AG04450 (cell line): ENCODE measurements at regions of chr10 and their contacts with region 1.

Region 1: DNA sequence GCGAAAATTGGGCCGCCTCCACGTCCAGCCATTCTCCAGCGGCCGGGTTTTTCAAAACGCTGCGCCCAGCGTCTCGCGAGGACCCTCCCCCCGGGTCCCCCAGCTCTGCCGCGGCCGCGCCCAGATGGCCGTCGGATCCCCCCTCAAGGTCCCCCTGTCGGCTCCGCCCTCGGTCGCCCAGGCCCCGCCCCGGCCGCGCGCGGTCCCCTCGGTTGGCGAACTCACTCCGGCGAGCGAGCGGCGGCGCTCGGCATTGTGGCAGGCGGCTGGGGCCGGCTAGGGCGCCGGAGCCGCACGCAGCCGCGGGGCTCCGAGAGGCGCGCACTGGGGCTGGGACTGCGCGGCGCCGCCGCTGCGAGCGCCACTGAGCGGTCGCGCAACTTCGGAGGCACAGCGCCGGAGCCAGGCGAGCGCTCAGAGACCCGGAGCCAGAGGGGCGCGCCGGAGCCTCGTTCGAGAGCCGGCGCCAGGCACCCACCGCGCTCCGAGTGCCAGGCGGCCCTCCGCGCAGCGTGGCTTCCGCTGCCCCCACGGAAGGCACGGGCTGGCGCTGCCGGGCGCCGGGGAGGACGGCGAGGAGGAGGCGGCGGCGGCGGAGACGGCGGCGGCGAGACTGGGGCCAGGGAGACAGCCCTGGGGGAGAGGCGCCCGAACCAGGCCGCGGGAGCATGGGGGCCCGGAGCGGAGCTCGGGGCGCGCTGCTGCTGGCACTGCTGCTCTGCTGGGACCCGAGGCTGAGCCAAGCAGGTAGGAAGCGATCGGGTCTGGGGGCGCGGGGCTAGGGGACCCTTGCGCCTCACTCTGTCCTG is at the start of gene UNC5B:
- DNase-seq: peak; percentile 48
- H3K4me3 ChIP-seq: peak within 1 kb of the TSS; percentile 88
- H3K27ac ChIP-seq: peak within 1 kb of the TSS; percentile 11
- H3K27me3 ChIP-seq: peaks cover 24% of the 10 kb centered on the region
- CTCF ChIP-seq: peak; percentile 23
- polyA plus RNA-seq, gene UNC5B: 8.1 and 10.2 TPM in 2 replicates

Region 2: GRCh38 chr10:70903262-70903921 is 309.1 kb before region 1 on chr10:
- CTCF ChIA-PET with region 1: interaction called, 13 read pairs
- POLR2A ChIA-PET with region 1: no interaction called
- DNase-seq: peak; percentile 4
- H3K4me3 ChIP-seq: no peak overlapping the region
- H3K27ac ChIP-seq: no peak overlapping the region
- H3K27me3 ChIP-seq: peaks cover 67% of the 10 kb centered on the region
- CTCF ChIP-seq: peak; percentile 91

Region 3: DNA sequence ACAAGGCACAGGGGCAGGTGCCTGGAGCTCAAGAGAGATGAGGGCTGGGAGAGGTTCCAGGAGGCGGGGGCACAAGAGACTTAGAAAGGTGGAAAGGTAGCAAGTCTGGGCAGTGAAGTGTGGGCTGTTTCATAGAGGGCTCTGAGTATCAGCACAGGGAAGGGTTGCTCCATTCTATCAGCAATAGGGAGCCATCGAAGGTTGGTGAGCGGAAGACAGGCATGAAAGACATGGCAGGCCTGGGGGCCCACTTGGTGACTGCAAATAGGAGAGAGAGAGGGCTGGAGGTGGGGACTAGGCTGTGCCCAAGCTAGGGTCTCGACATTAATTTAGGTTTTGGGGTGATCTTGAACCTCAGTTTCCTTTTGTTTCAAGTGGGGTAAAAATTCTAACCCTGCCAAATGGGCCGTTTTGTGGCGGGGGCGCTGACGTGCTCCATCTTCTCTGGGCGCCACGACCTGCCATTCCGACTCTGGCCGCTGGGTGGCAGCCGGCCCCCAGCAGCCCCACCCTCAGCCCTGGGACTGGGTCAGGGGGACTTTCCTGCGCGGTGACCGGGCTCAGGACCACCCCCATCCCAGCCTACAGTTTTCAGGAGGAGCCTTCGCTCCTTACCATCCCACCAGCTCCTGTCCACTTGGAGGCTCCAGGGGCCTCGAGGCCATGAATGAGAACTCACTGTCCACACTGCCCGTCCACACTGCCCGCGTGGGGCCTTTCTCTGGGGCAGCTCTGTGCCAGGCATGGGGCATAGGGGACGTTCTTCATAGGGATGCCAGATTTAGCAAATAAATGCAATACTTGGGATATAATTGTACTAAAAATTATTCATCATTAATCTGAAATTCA is 286.9 kb before region 1 on chr10:
- CTCF ChIA-PET with region 1: interaction called, 27 read pairs
- POLR2A ChIA-PET with region 1: no interaction called
- DNase-seq: no peak
- H3K4me3 ChIP-seq: no peak overlapping the region
- H3K27ac ChIP-seq: no peak overlapping the region
- H3K27me3 ChIP-seq: peaks cover 34% of the 10 kb centered on the region
- CTCF ChIP-seq: peak; percentile 91

Region 4: DNA sequence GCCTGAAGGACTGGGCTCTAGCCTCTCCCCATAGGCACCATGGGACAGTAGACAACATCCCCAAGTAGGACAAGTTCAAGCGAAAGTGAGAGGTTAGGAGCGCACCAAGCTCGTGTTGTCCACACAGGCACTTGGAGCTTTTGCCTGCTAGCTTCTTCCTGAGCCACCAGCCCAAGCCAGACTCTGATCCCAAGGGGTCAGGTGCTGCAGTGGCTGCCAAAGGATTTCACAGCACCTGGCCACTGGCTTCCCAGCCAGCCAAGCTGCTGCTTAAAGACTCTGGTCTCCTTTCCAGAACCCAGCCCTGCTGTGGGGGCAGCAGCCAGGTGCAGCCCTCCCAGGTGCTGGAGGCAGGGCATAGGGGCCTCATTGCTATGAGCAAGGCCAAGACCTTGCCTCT is 33.1 kb before region 1 on chr10:
- CTCF ChIA-PET with region 1: no interaction called
- POLR2A ChIA-PET with region 1: no interaction called
- DNase-seq: no peak
- H3K4me3 ChIP-seq: no peak overlapping the region
- H3K27ac ChIP-seq: no peak overlapping the region
- H3K27me3 ChIP-seq: peaks cover 58% of the 10 kb centered on the region
- CTCF ChIP-seq: no peak

Region 5: DNA sequence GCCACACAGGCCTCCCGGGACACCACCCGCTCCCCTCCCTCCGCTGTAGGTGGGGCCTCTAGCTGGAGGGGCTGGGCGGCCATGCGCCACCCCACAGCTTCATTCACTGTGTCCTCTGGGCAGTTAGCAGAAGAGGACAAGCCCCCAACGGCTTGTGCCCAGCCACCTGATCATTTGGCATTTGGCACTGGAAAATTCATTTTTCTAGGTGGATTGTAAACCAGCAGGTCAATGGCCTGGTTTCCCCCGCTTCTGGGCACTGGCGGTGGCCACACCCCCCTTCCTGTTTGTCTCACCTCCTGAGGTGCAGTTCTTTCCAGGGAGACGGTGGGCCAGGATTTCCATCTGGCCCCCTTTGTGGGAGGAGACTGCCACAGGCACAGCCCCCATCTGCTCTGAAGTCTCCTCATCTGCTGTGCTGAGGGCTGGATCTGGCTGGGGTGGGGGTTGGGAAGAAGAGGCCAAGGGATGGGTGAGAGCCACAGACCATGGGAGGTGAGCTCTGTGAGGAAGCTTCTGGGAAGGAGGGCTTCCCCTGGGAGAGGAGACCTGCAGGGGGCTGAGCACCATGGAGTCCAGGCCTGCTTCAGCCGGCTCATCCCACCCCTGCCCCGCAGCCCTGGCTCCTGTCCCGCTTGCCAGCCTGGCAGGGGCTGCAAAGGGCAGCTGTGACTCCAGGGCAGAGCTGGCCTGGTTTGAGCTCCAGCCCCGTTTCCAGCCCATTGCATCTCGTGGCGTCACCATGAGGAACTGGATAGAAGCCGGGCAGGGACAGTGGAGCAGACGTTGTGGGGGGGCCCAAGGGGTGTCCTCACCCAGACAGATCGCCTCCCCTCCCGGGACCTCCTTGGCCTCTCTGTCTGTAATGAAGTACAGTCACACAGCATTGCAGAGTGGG is 66.4 kb after region 1 on chr10:
- CTCF ChIA-PET with region 1: interaction called, 11 read pairs
- POLR2A ChIA-PET with region 1: no interaction called
- DNase-seq: no peak
- H3K4me3 ChIP-seq: no peak overlapping the region
- H3K27ac ChIP-seq: no peak overlapping the region
- H3K27me3 ChIP-seq: no peaks in the 10 kb centered on the region
- CTCF ChIP-seq: no peak

Region 6: DNA sequence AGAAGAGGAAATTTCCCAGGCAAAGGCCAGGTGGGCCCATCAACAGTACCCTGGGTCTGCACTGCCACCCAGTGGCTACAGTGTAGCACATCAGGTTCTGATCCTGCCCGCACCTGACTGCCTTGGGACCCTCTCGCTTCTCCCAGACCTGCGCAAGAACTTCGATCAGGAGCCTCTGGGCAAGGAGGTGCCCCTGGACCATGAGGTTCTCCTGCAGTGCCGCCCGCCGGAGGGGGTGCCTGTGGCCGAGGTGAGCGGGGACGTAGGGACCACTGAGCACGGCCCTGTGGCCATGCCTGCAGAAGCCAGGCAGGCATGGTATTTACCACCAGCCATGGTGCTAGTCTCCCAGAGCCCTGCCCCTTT is 72.6 kb after region 1 on chr10:
- CTCF ChIA-PET with region 1: interaction called, 11 read pairs
- POLR2A ChIA-PET with region 1: no interaction called
- DNase-seq: no peak
- H3K4me3 ChIP-seq: no peak overlapping the region
- H3K27ac ChIP-seq: no peak overlapping the region
- H3K27me3 ChIP-seq: no peaks in the 10 kb centered on the region
- CTCF ChIP-seq: peak; percentile 79